CD4-positive, alpha-beta T cell (primary cell): ENCODE measurements at regions of chr12 and their contacts with region 1.

Region 1: DNA sequence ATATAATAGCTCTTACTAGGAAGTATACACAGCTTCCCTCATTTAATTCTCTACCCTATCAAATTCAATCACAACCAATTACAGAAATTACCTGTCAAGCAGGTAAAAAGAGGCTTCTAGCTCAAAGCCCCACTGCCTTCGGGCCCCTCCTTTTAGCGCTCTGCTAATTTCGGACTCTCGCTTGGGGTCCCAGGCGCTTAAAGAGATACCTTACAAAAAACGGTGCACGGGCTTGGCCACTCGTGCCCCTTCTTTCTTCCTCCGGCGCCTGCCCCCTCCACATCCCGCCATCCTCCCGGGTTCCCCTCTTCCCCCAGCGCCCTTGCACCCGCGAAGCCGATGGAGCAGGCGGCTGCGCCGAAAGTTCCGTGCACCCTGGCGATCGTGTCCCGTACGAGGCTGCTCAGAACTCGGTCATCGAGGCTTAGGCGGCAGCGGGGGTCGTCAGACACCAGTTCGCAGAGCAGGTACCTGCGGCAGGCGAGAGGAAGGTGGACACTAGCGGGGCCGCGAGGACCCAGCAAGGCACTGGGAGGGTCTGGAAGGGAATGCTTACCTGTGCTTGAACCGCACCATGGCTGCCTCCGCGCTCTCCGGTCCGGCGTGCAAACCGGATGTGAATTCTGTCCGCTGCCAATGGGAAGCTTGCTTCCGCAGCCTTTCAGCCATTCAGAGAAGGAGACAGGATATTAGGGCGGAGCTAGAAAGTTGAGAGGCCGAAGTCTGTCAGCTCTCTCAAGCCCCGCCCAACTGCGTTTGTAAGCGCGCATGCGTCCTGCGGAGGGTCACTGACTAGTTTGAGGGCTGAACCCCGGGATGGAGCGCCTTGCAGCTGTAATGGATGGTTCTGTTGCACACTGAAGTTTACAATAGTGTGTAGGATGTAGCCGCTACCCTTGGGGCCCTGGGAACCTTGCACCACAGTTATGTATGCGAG is at the start of gene POP5:
- DNase-seq: peak; percentile 80 to 97 (median 90)
- ATAC-seq: peak; percentile 90
- H3K4me3 ChIP-seq: peak within 1 kb of the TSS; percentile 92
- H3K4me3 Mint-ChIP-seq: peak within 1 kb of the TSS; percentile 97
- H3K27ac ChIP-seq: peak within 1 kb of the TSS; percentile 66 to 69
- H3K27ac Mint-ChIP-seq: peak within 1 kb of the TSS; percentile 85
- H3K4me1 ChIP-seq: peaks cover 32% of the 10 kb centered on the region
- H3K4me1 Mint-ChIP-seq: peaks cover 45% of the 10 kb centered on the region
- H3K27me3 ChIP-seq: no peaks in the 10 kb centered on the region
- H3K27me3 Mint-ChIP-seq: peaks cover 21% of the 10 kb centered on the region
- CTCF ChIP-seq: no peak
- total RNA-seq, gene POP5: 17.9 to 22.0 TPM

Region 2: GRCh38 chr12:120437754-120438494 is 143.1 kb before region 1 on chr12 and contains the start of gene COX6A1:
- CTCF ChIA-PET with region 1: no interaction called
- POLR2A ChIA-PET with region 1: no interaction called
- intact Hi-C with region 1: loop called (anchors 2 to 5 kb)
- DNase-seq: peak; percentile 91 to 100 (median 96)
- ATAC-seq: peak; percentile 94
- H3K4me3 ChIP-seq: peak within 1 kb of the TSS; percentile 88
- H3K4me3 Mint-ChIP-seq: peak within 1 kb of the TSS; percentile 97
- H3K27ac ChIP-seq: peak within 1 kb of the TSS; percentile 69 to 88
- H3K27ac Mint-ChIP-seq: peak within 1 kb of the TSS; percentile 94
- H3K4me1 ChIP-seq: peaks cover 26% of the 10 kb centered on the region
- H3K4me1 Mint-ChIP-seq: peaks cover 31% of the 10 kb centered on the region
- H3K27me3 ChIP-seq: no peaks in the 10 kb centered on the region
- H3K27me3 Mint-ChIP-seq: no peaks in the 10 kb centered on the region
- CTCF ChIP-seq: no peak
- total RNA-seq, gene COX6A1: 112 to 116 TPM

Region 3: GRCh38 chr12:120534203-120534702 is 46.8 kb before region 1 on chr12 and contains the start of gene RNF10:
- CTCF ChIA-PET with region 1: no interaction called
- POLR2A ChIA-PET with region 1: interaction called, 11 read pairs
- intact Hi-C with region 1: loop called (anchors 1 to 5 kb)
- DNase-seq: peak; percentile 53 to 92 (median 68)
- ATAC-seq: peak; percentile 65
- H3K4me3 ChIP-seq: peak within 1 kb of the TSS; percentile 92
- H3K4me3 Mint-ChIP-seq: peak within 1 kb of the TSS; percentile 91
- H3K27ac ChIP-seq: peak within 1 kb of the TSS; percentile 66 to 89
- H3K27ac Mint-ChIP-seq: peak within 1 kb of the TSS; percentile 91
- H3K4me1 ChIP-seq: peaks cover 49% of the 10 kb centered on the region
- H3K4me1 Mint-ChIP-seq: peaks cover 62% of the 10 kb centered on the region
- H3K27me3 ChIP-seq: no peaks in the 10 kb centered on the region
- H3K27me3 Mint-ChIP-seq: no peaks in the 10 kb centered on the region
- CTCF ChIP-seq: no peak
- total RNA-seq, gene RNF10: 441 to 446 TPM

Region 4: DNA sequence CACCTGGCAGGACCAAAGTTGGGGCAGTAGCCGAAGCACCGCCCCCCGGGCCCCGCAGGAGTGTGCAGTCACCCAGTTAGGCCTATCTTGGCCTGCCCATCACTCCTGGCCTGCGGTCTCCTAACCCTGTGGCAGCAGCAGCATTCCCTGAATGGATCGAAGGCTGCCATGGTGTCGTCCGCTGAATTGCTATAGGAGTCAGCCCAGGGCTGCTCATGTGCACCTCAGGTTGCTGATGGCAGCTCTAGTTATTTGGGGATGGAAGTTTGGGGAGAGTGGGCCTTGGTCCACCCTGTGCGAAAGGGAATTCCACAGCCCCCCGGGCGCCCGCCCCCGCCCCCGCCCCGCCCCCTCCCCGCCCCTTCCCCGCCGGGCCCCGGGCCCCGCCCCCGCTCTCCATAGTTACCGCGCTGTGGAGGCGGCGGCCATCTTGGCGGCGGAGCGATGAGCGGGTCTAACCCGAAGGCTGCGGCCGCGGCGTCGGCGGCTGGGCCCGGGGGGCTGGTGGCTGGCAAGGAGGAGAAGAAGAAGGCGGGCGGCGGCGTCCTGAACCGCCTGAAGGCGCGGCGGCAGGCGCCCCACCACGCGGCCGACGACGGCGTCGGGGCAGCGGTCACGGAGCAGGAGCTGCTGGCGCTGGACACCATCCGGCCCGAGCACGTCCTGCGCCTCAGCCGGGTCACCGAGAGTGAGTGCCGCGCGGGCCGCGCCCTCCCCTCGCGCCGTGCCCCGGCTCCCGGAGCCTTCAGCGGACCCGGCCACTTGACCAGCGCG is 129.2 kb after region 1 on chr12 and contains the start of gene UNC119B:
- CTCF ChIA-PET with region 1: no interaction called
- POLR2A ChIA-PET with region 1: interaction called, 3 read pairs
- intact Hi-C with region 1: loop called (anchors 1 kb)
- DNase-seq: peak; percentile 57 to 87 (median 70)
- ATAC-seq: peak; percentile 86
- H3K4me3 ChIP-seq: peak within 1 kb of the TSS; percentile 83
- H3K4me3 Mint-ChIP-seq: peak within 1 kb of the TSS; percentile 96
- H3K27ac ChIP-seq: peak within 1 kb of the TSS; percentile 13 to 58
- H3K27ac Mint-ChIP-seq: peak within 1 kb of the TSS; percentile 86
- H3K4me1 ChIP-seq: peaks cover 30% of the 10 kb centered on the region
- H3K4me1 Mint-ChIP-seq: peaks cover 42% of the 10 kb centered on the region
- H3K27me3 ChIP-seq: no peaks in the 10 kb centered on the region
- H3K27me3 Mint-ChIP-seq: no peaks in the 10 kb centered on the region
- CTCF ChIP-seq: no peak
- total RNA-seq, gene UNC119B: 10.7 TPM

Region 5: GRCh38 chr12:120971299-120972179 is 390.5 kb after region 1 on chr12:
- CTCF ChIA-PET with region 1: interaction called, 9 read pairs
- POLR2A ChIA-PET with region 1: interaction called, 5 read pairs
- intact Hi-C with region 1: loop called (anchors 1 to 2 kb)
- DNase-seq: peak in 10 of 14 experiments; percentile 4 to 79 (median 22)
- ATAC-seq: peak; percentile 98
- H3K4me3 ChIP-seq: no peak overlapping the region
- H3K4me3 Mint-ChIP-seq: no peak overlapping the region
- H3K27ac ChIP-seq: no peak overlapping the region
- H3K27ac Mint-ChIP-seq: no peak overlapping the region
- H3K4me1 ChIP-seq: peaks cover 6% of the 10 kb centered on the region
- H3K4me1 Mint-ChIP-seq: no peaks in the 10 kb centered on the region
- H3K27me3 ChIP-seq: no peaks in the 10 kb centered on the region
- H3K27me3 Mint-ChIP-seq: no peaks in the 10 kb centered on the region
- CTCF ChIP-seq: peak; percentile 78